ENCODE measurements at regions of chr12 and their contacts with region 1.

Region 1: DNA sequence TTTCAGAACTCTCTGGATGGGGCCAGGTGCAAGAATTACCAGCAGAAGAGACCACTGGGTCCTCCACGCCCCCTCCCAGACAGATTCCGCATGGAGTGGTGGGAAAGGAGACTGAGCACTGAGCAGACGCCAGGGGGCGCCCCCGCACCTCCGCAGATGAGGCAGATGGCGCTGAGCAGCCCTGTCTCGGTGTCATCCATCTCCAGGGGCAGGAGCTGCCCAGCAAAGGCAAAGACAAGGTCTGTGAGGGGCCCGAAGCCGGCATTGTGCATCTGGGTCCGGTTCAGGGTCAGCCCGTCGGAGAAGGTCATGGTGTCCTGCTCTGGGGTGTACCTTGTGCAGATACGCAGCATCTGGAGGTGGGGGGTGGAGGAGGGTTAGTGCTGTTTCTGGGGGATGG is 6.3 kb upstream of the ITGB7 start:
- DNase-seq: peak; percentile 81
- CTCF ChIP-seq: peak; percentile 91

Region 2: GRCh38 chr12:52715416-52715815 is 497.9 kb before region 1 on chr12:
- CTCF ChIA-PET with region 1: no interaction called
- POLR2A ChIA-PET with region 1: no interaction called
- DNase-seq: no peak
- CTCF ChIP-seq: no peak

Region 3: DNA sequence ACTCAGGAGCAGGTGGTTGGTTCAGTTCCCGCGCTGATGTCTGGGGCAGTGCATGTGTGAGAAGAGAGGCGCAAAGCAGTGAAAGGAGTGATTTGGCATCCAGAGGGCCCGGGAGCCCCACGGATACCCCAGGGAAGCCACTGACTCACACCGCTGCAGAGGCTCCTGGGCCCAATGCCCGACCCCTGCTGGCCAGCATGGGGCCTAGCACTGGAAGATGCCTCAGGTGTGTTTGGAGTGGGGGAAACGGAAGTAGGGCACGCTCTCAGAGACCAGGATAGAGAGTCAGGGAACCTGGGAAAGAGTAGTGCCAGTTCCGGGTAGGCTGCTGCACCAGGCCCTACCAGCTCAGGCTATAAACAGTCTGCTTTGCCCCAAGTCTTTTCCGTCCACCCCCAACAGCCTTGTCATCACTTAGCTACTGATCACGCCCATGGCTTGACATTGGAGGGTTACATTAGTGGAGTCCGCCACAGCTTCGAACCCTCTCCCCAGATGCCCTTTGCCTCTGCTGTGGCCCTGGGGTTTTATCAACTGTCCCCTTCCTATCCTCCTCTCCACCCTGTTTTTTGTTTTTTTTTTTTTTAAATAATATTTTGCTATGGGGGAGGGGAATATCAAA is 23.1 kb before region 1 on chr12:
- CTCF ChIA-PET with region 1: interaction called, 18 read pairs
- POLR2A ChIA-PET with region 1: no interaction called
- DNase-seq: peak; percentile 61
- CTCF ChIP-seq: peak; percentile 76

Region 4: GRCh38 chr12:53230108-53230850 is 16.9 kb after region 1 on chr12:
- CTCF ChIA-PET with region 1: interaction called, 18 read pairs
- POLR2A ChIA-PET with region 1: no interaction called
- DNase-seq: no peak
- CTCF ChIP-seq: no peak

Region 5: GRCh38 chr12:53241623-53242412 is 28.5 kb after region 1 on chr12:
- CTCF ChIA-PET with region 1: interaction called, 40 read pairs
- POLR2A ChIA-PET with region 1: no interaction called
- DNase-seq: no peak
- CTCF ChIP-seq: no peak

Region 6: DNA sequence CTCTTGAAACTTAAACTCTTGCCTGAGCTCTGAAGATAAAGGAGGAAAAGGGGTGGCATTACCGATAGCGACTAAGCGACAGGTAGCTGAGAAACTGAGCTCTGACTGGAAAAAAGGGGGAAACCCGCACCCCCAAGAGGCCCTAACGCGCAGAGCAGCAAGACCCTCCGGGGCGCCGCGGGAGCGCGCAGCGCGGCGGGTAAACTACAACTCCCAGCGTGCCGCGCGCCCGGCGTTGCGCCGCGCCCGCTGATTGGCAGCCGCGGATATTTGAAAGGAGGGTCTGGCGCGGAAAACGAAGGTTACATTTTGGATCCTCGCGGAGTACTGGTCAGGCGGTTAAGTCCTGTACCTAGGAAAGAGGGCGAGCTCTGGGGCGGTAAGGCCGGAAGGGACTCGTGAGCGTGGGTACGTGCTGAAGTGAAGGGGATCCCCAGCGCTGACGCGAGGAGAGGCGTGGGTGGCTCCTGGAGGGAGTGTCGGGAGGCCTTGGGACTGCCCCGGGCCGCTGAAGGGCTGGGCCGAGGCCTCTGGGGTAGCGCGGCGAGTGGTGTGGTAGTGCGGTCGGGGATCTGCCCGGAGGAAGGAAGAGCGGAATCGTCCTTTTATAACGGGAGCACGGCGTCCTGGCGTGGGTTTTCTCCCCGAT is 54.8 kb after region 1 on chr12 and contains the start of gene ESPL1:
- CTCF ChIA-PET with region 1: interaction called, 92 read pairs
- POLR2A ChIA-PET with region 1: interaction called, 3 read pairs
- DNase-seq: peak; percentile 92
- CTCF ChIP-seq: peak; percentile 39

Region 7: GRCh38 chr12:53344824-53345485 is 131.6 kb after region 1 on chr12:
- CTCF ChIA-PET with region 1: interaction called, 41 read pairs
- POLR2A ChIA-PET with region 1: no interaction called
- DNase-seq: peak; percentile 84
- CTCF ChIP-seq: peak; percentile 76

Region 8: DNA sequence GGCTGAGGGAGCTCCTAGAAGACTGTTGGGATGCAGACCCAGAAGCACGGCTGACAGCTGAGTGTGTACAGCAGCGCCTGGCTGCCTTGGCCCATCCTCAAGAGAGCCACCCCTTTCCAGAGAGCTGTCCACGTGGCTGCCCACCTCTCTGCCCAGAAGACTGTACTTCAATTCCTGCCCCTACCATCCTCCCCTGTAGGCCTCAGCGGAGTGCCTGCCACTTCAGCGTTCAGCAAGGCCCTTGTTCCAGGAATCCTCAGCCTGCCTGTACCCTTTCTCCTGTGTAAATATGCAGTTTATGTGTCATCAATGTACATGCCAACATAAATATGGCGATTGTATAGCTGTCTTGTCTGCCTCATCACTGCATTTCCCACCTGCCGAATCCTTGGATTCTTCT is 217.8 kb after region 1 on chr12:
- CTCF ChIA-PET with region 1: no interaction called
- POLR2A ChIA-PET with region 1: no interaction called
- DNase-seq: no peak
- CTCF ChIP-seq: no peak

Measured in GM10248 (cell line).